Activated naive CD4-positive, alpha-beta T cell treated with anti-CD3 and anti-CD28 coated beads for 36 hours (primary cell): ENCODE measurements at regions of chr14 and their contacts with region 1.

Region 1: DNA sequence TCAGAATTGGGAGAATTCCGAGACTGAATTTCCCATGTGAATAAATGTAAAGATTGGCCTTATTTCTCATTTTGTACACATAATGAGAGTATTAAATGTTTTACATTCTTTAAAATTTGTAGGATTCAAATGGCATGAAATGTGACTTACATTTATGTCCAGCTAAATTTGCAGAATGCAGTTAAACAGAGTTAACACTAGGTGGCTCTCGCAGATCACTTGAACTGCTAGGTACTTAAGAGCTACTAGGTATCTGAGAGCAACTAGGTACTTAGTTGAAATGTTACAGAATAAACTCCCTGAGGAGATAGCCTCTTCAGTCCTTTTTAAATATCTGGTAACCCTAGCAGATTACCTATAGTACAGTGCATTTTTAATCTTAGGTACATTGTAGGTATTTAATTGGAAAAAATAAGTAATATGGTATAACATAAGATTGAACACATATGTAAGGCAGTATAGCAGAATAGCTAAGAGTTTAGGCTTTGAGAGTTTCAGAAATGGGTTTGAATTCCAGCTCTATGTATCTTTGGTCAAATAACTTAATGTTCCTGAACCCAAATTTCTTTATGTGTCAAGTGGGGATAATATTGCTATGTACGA is 73.8 kb downstream of the KIAA0586 start:
- DNase-seq: peak; percentile 52
- H3K4me3 Mint-ChIP-seq: no peak overlapping the region
- H3K27ac Mint-ChIP-seq: no peak overlapping the region
- H3K4me1 Mint-ChIP-seq: no peaks in the 10 kb centered on the region
- H3K27me3 Mint-ChIP-seq: no peaks in the 10 kb centered on the region

Region 2: DNA sequence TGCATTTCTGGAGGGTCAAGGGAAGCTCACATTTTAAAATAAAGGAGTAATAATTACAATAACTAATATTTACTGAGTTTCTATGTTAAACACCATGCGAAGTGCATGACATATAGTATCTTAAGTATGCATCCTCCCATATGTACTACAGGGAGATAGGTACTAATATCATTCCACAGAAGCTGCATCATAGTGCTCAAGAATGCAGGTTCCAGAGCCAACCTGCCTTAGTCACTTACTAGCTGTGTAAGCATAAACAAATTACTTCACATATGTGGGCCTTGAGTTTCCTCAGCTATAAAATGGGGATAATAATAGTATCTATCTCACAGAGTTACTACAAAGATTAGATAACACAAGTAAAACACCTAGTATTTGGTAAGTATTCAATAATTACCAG is 367.6 kb before region 1 on chr14:
- CTCF ChIA-PET with region 1: no interaction called
- intact Hi-C with region 1: no loop called
- DNase-seq: no peak
- H3K4me3 Mint-ChIP-seq: no peak overlapping the region
- H3K27ac Mint-ChIP-seq: no peak overlapping the region
- H3K4me1 Mint-ChIP-seq: peaks cover 2% of the 10 kb centered on the region
- H3K27me3 Mint-ChIP-seq: peaks cover 4% of the 10 kb centered on the region

Region 3: DNA sequence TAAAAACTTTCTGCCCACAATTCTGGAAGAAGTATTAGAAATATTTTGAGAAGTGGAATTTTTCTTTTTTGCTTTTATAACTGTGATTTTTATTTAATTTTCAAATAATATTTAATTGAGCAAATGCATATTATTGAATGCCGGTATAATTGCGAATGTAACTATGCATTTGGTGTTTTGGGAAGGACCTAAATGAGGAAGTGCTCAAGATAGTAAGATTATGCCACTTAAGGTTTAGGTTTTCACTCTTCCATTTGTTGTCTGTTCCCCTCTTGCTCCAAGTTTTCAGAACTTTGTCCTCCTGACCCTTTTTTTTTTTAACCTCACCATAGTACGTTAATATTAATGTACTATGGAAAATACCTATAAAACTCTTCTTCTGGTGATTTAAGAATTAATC is 12.0 kb after region 1 on chr14:
- CTCF ChIA-PET with region 1: interaction called, 10 read pairs
- intact Hi-C with region 1: no loop called
- DNase-seq: no peak
- H3K4me3 Mint-ChIP-seq: no peak overlapping the region
- H3K27ac Mint-ChIP-seq: no peak overlapping the region
- H3K4me1 Mint-ChIP-seq: no peaks in the 10 kb centered on the region
- H3K27me3 Mint-ChIP-seq: no peaks in the 10 kb centered on the region

Region 4: GRCh38 chr14:58826845-58827686 is 325.8 kb after region 1 on chr14:
- CTCF ChIA-PET with region 1: interaction called, 17 read pairs
- intact Hi-C with region 1: loop called (anchors 1 kb)
- DNase-seq: no peak
- H3K4me3 Mint-ChIP-seq: no peak overlapping the region
- H3K27ac Mint-ChIP-seq: no peak overlapping the region
- H3K4me1 Mint-ChIP-seq: no peaks in the 10 kb centered on the region
- H3K27me3 Mint-ChIP-seq: peaks cover 2% of the 10 kb centered on the region

Region 5: DNA sequence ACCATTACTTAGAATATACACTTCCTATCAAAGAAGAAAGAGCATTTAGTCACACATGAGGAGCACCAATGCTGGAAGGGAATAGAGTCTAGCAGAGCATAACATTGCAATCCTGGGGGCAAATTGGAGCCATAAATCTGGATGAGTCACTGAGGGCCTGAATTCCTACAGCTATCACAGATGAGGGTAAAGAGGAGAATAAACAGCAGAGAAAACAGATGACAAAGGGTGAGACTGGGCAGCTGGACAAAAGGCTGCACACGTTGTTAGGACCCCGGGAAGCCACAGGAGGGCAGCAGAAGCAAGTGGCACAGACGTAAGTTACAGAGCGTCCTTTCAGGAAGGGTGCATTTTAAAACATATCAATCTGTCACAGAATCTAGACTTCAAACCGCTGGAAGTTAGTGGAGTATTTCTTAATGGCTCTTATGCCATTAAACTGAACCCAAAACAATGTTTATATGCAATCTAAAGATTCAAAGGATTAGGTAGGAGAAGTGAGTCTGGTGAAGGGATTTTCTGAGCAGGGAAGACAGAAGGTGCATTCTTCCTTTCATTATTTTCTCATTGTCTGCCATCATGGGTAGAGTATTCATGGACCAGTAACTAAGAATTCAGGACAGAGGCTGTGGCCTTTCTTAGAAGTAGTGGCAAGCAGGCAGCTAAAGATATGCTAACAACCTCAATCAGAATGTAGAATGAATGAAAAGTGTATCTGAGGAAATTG is 527.3 kb after region 1 on chr14:
- CTCF ChIA-PET with region 1: interaction called, 7 read pairs
- intact Hi-C with region 1: loop called (anchors 10 kb)
- DNase-seq: peak; percentile 62
- H3K4me3 Mint-ChIP-seq: no peak overlapping the region
- H3K27ac Mint-ChIP-seq: no peak overlapping the region
- H3K4me1 Mint-ChIP-seq: peaks cover 4% of the 10 kb centered on the region
- H3K27me3 Mint-ChIP-seq: no peaks in the 10 kb centered on the region

Region 6: GRCh38 chr14:59126710-59127432 is 625.6 kb after region 1 on chr14:
- CTCF ChIA-PET with region 1: no interaction called
- intact Hi-C with region 1: loop called (anchors 1 kb)
- DNase-seq: peak; percentile 24
- H3K4me3 Mint-ChIP-seq: no peak overlapping the region
- H3K27ac Mint-ChIP-seq: no peak overlapping the region
- H3K4me1 Mint-ChIP-seq: no peaks in the 10 kb centered on the region
- H3K27me3 Mint-ChIP-seq: peaks cover 7% of the 10 kb centered on the region